ENCODE measurements at regions of chr17 and their contacts with region 1.

Region 1: GRCh38 chr17:2847381-2848333 is 51.4 kb downstream of the RAP1GAP2 start:
- DNase-seq: peak; percentile 57 to 79 (median 73)
- H3K4me3 ChIP-seq: peak overlapping the region in 2 of 7 experiments; percentile 25 to 30
- H3K27ac ChIP-seq: no peak overlapping the region
- H3K4me1 ChIP-seq: peaks cover 2 to 43% (median 37%) of the 10 kb centered on the region in 4 experiments
- H3K27me3 ChIP-seq: no peaks in the 10 kb centered on the region

Region 2: DNA sequence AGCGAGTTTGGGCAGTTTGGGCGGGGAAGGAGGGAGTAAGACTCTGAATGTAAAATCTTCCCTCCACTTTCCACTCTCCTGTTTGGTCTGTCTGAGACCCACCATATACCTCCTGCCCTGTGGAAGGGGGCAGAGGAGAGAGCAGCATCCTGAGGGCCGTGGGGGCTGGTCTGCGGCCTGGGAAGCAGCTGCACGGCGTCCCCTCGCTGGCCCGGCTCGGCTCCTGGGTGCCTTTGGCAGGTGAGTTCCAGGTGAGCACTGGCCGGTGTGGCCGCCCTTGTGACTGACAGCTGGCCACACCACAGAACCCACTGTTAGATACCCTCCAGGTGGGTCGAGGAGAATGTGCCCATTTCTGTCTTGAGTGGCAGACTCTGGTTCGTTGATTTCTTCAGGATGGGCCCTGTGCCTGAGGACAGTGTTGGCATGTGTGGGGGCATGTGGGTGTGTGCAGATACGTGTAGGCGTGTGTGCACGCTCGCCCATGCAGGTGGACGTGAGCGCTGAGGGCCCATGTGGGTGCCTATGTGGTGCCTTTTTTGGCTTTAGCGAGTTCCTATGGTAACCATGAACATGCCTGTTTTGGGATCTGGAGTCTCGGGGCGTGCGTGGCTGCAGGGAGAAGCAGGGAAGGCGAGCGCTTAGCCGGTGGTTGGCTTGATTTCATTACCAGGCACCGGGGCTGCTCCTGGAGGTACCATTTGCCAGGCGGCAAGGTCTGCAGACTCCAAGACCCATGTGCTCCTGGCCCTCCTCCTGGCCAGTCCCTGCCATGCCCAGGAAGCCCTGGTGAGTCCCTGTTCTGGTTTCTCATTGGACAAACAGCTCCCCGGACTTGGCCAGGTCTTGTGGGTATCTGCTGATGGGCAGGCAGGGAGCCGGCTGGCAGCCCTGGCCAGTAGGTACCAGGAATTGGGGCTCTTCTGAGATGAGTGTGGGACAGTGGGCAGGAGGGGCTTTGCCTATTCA is 39.0 kb before region 1 on chr17:
- CTCF ChIA-PET with region 1: no interaction called
- POLR2A ChIA-PET with region 1: no interaction called
- DNase-seq: no peak
- H3K4me3 ChIP-seq: no peak overlapping the region
- H3K27ac ChIP-seq: no peak overlapping the region
- H3K4me1 ChIP-seq: peaks cover 0 to 18% (median 8%) of the 10 kb centered on the region in 4 experiments
- H3K27me3 ChIP-seq: no peaks in the 10 kb centered on the region

Region 3: DNA sequence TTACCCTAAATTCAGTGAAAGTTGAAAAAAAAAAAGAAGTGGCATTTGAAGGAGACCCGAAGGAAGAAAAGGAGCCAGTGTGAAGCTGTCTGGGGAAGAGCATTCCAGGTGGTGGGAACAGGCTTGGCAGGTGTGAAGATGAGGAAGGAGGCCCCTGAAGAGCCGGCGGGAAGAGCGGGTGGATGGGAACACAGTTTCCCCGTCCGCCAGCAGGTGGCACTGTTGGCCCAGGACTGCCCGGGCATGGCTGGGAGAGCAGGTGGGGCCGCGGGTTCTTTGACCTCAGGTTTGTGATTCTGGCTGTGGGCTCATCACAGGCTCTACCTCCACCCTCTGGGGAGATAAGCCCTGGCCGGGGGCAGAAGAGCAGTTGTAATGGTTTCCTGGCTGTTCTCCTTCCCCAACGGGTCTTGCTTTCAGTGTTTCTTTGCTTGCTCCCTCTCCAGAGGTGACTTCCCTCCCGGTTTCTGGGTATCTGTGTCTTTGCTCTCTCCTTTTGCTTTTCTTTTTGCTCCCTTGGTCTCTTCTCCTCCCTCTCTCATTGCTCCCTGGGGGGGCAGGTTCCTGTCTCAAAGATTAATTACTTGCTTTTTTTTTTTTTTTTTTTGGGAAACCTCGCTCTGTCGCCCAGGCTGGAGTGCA is 19.1 kb before region 1 on chr17:
- CTCF ChIA-PET with region 1: interaction called, 27 read pairs
- POLR2A ChIA-PET with region 1: no interaction called
- DNase-seq: peak; percentile 65 to 81 (median 76)
- H3K4me3 ChIP-seq: peak overlapping the region in 1 of 7 experiments; percentile 28
- H3K27ac ChIP-seq: no peak overlapping the region
- H3K4me1 ChIP-seq: peaks cover 0 to 26% (median 18%) of the 10 kb centered on the region in 4 experiments
- H3K27me3 ChIP-seq: no peaks in the 10 kb centered on the region

Region 4: GRCh38 chr17:2860045-2860444 is 12.4 kb after region 1 on chr17:
- CTCF ChIA-PET with region 1: interaction called, 13 read pairs
- POLR2A ChIA-PET with region 1: no interaction called
- DNase-seq: no peak
- H3K4me3 ChIP-seq: no peak overlapping the region
- H3K27ac ChIP-seq: no peak overlapping the region
- H3K4me1 ChIP-seq: peaks cover 0 to 16% (median 5%) of the 10 kb centered on the region in 4 experiments
- H3K27me3 ChIP-seq: no peaks in the 10 kb centered on the region

Region 5: DNA sequence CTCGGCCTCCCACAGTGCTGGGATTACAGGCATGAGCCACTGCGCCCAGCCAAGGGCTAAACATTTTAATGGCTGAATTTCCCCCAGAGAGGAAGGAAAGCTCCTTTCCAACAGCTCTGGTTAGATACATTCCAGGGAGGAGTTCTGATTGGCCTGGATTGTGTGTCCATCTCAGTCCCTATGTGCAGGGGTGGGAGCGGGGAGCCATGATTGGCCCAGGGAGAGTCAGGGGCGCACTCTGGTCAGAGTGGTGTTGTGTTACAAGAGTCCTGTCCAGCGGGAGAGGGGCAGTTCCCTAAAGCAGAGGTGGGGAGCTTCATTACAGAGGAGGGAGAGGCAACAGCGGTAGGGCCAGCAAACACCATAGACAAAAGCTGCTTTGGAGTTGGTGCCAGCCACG is 23.5 kb after region 1 on chr17:
- CTCF ChIA-PET with region 1: no interaction called
- POLR2A ChIA-PET with region 1: no interaction called
- DNase-seq: no peak
- H3K4me3 ChIP-seq: no peak overlapping the region
- H3K27ac ChIP-seq: no peak overlapping the region
- H3K4me1 ChIP-seq: no peaks in the 10 kb centered on the region
- H3K27me3 ChIP-seq: no peaks in the 10 kb centered on the region

Region 6: GRCh38 chr17:2982854-2983253 is 135.2 kb after region 1 on chr17:
- CTCF ChIA-PET with region 1: no interaction called
- POLR2A ChIA-PET with region 1: no interaction called
- DNase-seq: no peak
- H3K4me3 ChIP-seq: no peak overlapping the region
- H3K27ac ChIP-seq: no peak overlapping the region
- H3K4me1 ChIP-seq: no peaks in the 10 kb centered on the region
- H3K27me3 ChIP-seq: no peaks in the 10 kb centered on the region

Region 7: DNA sequence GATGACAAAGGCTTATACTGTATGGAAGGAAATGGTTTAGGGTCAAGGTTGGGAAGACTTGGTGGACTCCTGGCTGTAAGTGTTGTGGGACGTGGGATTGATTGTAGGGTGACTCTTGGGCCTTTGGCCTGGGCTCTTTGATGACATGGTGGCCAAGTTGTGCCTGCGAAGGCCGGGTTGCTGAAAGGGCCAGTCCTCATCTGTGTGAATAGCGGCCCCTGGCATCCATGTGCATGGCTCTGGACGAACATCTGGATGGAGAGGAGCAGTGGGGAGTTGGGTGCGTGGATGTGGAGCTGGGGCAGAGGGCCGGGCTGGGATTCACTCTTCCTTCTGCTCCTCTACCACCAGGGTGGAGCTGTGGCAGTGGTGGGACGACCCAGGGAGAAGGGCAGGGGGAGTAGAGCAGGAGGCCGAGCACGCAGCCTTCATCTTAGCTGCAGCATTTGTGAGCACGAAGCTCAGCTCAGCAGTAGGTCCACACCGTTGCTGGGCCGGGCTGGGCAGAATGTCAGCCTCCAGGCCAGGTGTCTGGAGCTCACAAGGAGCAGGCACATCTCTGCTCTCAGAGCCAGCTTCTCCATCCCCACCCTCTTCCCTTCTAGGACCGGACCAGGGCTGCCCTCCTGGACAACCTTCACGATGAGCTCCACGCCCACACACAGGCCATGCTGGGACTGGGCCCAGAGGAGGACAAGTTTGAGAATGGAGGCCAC is 159.9 kb after region 1 on chr17:
- CTCF ChIA-PET with region 1: interaction called, 34 read pairs
- POLR2A ChIA-PET with region 1: no interaction called
- DNase-seq: no peak
- H3K4me3 ChIP-seq: no peak overlapping the region
- H3K27ac ChIP-seq: no peak overlapping the region
- H3K4me1 ChIP-seq: peaks cover 2 to 33% (median 31%) of the 10 kb centered on the region in 4 experiments
- H3K27me3 ChIP-seq: no peaks in the 10 kb centered on the region

Measured in common myeloid progenitor, CD34-positive (primary cell).